WTC11 (cell line): ENCODE measurements at regions of chr3 and their contacts with region 1.

Region 1: DNA sequence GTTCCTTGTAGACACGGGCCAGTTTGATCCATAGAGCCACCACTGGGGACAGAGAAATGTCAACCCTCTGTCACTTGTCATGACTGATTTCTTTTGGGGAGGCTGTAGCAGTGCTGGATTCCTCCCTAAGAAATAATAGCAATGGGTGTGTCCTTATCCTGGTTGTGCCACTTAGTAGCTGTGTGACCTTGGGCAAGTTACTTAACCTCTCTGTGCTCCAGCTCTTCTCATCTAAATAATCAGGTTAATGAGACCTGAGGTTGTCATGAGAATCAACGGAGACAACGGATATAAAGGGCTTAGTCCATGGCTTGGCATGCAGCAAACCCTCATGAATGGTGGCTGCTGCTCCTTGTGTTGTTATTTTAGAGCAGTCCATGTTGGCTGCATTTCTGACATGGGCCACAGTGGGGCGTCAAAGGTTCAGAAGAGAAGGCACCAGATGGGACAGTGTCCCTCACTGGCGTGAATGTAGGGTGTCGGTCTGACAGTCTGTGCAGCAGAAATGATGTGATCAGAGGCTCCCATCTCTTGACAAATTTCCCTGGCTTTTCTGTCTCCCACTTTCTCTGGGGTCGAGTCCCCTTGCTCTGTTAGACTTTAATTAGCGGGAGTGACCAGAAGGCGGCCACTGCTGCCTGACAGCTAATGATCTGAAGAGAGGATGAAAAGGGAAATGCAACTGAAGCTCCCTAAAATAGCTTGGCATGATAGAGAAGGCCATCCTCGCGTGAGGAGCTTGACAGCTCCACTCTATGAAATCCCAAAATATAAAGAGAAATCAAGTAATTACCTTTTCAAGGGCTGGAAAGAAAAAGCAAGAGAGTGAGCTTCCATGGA is 209.4 kb downstream of the CADPS start:
- DNase-seq: peak; percentile 93
- ATAC-seq: peak; percentile 91
- H3K4me3 Mint-ChIP-seq: peak overlapping the region; percentile 33
- H3K27ac Mint-ChIP-seq: no peak overlapping the region
- H3K4me1 Mint-ChIP-seq: peaks cover 17% of the 10 kb centered on the region
- H3K27me3 Mint-ChIP-seq: no peaks in the 10 kb centered on the region
- CTCF ChIP-seq: peak; percentile 87

Region 2: GRCh38 chr3:62708638-62709373 is 43.0 kb after region 1 on chr3:
- CTCF ChIA-PET with region 1: interaction called, 10 read pairs
- POLR2A ChIA-PET with region 1: no interaction called
- DNase-seq: no peak
- ATAC-seq: peak; percentile 71
- H3K4me3 Mint-ChIP-seq: no peak overlapping the region
- H3K27ac Mint-ChIP-seq: no peak overlapping the region
- H3K4me1 Mint-ChIP-seq: peaks cover 40% of the 10 kb centered on the region
- H3K27me3 Mint-ChIP-seq: no peaks in the 10 kb centered on the region; the same call in 1 of the 2 replicates
- CTCF ChIP-seq: no peak

Region 3: DNA sequence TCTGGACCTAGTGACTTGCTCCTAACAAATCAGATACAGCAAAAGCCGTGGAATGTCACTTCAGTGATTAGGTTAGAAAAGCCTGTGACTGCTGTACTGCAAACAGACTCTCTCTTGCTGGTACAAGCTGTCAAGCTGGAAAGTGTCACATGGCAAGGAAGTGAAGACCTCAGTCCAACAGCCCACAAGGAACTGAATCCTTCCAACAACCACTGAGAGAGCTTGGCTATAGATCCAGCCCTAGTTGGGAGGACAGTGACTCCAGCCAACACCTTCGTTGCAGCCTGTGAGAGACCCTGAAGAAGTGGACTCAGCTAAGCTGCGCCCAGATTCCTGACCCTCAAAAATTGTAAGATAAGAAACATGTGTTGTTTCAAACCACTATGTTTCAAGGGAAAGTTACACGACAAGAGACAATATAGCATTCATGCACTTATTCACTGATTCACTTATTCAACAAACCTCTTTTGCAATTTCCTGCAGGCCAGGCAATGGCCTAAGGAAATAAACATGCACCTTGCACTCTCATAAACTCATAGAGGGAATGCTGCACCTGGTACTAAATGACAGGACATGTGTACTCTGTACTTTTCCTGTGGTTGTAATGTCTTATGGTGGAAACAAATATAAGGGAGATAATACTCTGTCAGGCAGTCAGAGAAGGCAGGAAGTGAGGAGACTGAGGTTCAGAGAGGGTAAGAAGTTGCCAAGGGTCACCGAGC is 66.5 kb after region 1 on chr3:
- CTCF ChIA-PET with region 1: interaction called, 12 read pairs
- POLR2A ChIA-PET with region 1: no interaction called
- DNase-seq: no peak
- ATAC-seq: no peak
- H3K4me3 Mint-ChIP-seq: no peak overlapping the region
- H3K27ac Mint-ChIP-seq: no peak overlapping the region
- H3K4me1 Mint-ChIP-seq: no peaks in the 10 kb centered on the region; the same call in 1 of the 2 replicates
- H3K27me3 Mint-ChIP-seq: no peaks in the 10 kb centered on the region
- CTCF ChIP-seq: no peak

Region 4: DNA sequence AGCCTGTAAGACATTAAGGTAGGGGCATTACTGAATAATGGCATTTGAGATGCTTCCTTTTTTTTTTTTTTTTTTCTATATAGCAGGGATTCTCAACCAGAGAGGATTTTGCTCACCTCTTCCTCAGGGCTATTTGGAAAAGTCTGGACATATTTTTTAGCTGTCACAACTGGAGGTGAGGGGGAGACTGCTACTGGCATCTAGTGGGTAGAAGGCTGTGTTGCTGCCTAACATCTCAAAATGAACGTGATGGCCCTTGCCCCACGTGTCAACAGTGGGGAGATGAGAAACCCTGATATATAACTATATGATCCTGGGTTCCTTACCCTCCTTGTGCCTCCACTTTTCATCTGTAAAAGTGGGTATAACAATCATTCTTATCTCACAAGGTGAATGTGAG is 137.5 kb after region 1 on chr3:
- CTCF ChIA-PET with region 1: interaction called, 22 read pairs
- POLR2A ChIA-PET with region 1: no interaction called
- DNase-seq: no peak
- ATAC-seq: no peak; the same call in 1 of the 2 replicates
- H3K4me3 Mint-ChIP-seq: no peak overlapping the region
- H3K27ac Mint-ChIP-seq: no peak overlapping the region
- H3K4me1 Mint-ChIP-seq: peaks cover 16% of the 10 kb centered on the region
- H3K27me3 Mint-ChIP-seq: no peaks in the 10 kb centered on the region
- CTCF ChIP-seq: no peak

Region 5: DNA sequence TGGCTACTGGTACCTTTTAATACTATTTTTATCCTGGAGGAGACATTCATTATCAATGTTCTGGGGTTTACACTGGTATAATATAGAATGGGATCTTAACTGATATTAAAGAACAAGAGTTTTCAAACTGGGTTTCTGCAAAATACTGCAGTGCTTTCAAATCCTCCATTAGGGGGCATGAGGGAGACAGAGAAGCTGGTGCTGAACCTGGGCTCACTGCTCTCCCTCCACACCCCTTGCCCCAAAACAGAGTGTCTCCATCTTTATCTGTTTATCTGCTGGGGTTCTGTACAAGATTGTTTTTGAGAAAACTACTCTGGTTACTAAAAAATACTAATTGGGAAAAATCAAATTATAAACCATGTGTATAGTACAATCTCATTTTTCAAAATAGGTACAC is 167.7 kb after region 1 on chr3:
- CTCF ChIA-PET with region 1: interaction called, 16 read pairs
- POLR2A ChIA-PET with region 1: no interaction called
- DNase-seq: no peak
- ATAC-seq: peak; percentile 85
- H3K4me3 Mint-ChIP-seq: no peak overlapping the region
- H3K27ac Mint-ChIP-seq: no peak overlapping the region
- H3K4me1 Mint-ChIP-seq: no peaks in the 10 kb centered on the region
- H3K27me3 Mint-ChIP-seq: no peaks in the 10 kb centered on the region
- CTCF ChIP-seq: peak; percentile 33; the same call in 1 of the 2 replicates

Region 6: GRCh38 chr3:62926494-62926893 is 260.7 kb after region 1 on chr3:
- CTCF ChIA-PET with region 1: interaction called, 16 read pairs
- POLR2A ChIA-PET with region 1: no interaction called
- DNase-seq: peak; percentile 65
- ATAC-seq: peak; percentile 99
- H3K4me3 Mint-ChIP-seq: no peak overlapping the region
- H3K27ac Mint-ChIP-seq: no peak overlapping the region
- H3K4me1 Mint-ChIP-seq: peaks cover 23% of the 10 kb centered on the region
- H3K27me3 Mint-ChIP-seq: no peaks in the 10 kb centered on the region; the same call in none of the 2 replicates
- CTCF ChIP-seq: no peak

Region 7: GRCh38 chr3:62936626-62937254 is 270.9 kb after region 1 on chr3:
- CTCF ChIA-PET with region 1: no interaction called
- POLR2A ChIA-PET with region 1: no interaction called
- DNase-seq: no peak
- ATAC-seq: no peak
- H3K4me3 Mint-ChIP-seq: no peak overlapping the region
- H3K27ac Mint-ChIP-seq: no peak overlapping the region
- H3K4me1 Mint-ChIP-seq: peaks cover 16% of the 10 kb centered on the region
- H3K27me3 Mint-ChIP-seq: peaks cover 3% of the 10 kb centered on the region; the same call in 1 of the 2 replicates
- CTCF ChIP-seq: no peak

Region 8: DNA sequence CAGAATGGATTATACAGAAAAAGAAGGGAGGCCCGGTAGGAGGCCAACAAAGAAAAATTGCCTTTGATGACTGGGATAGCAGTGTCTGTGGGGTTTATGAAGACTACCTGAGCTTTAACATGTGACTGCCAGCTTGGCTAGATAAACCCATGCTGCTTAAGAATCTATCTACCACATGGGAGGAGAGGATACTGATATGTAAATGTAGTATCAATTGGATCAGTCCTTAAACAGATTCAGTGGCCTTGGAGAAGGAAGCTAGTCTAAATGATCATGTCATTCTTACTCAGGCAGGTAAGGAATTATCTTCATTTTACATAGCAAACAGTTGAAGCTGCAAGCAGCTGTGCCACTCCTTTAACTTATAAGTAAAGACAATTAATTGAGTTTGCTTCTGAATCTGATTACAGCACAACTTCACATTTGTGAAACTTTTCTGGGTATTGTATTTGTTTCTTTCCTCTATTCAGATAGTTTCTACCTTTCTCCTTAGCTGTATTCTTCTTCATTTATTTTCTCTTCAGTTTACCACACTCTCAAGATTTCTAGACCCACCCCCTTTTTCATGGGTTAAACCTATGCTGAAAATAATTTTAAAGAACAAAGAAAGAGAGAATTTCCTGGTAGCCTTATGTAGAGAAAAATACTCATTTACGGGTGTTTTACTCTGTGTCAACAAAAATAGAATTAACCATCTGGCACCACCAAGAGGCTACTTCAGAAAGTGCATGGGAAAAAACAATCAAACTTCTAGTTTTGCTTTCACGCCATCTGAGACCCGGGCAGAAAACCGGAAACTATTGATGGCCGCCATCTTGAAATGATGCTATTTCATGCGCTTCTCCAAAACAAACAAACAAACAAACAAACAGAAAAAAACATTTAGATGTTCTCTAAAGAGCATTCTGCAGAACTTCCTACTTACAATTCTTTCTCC is 562.5 kb after region 1 on chr3:
- CTCF ChIA-PET with region 1: interaction called, 19 read pairs
- POLR2A ChIA-PET with region 1: interaction called, 3 read pairs
- DNase-seq: peak; percentile 29
- ATAC-seq: peak; percentile 73
- H3K4me3 Mint-ChIP-seq: no peak overlapping the region
- H3K27ac Mint-ChIP-seq: peak overlapping the region; percentile 86; the same call in 1 of the 2 replicates
- H3K4me1 Mint-ChIP-seq: peaks cover 20% of the 10 kb centered on the region
- H3K27me3 Mint-ChIP-seq: no peaks in the 10 kb centered on the region
- CTCF ChIP-seq: peak; percentile 39